ENCODE measurements at regions of chr10 and their contacts with region 1.

Region 1: DNA sequence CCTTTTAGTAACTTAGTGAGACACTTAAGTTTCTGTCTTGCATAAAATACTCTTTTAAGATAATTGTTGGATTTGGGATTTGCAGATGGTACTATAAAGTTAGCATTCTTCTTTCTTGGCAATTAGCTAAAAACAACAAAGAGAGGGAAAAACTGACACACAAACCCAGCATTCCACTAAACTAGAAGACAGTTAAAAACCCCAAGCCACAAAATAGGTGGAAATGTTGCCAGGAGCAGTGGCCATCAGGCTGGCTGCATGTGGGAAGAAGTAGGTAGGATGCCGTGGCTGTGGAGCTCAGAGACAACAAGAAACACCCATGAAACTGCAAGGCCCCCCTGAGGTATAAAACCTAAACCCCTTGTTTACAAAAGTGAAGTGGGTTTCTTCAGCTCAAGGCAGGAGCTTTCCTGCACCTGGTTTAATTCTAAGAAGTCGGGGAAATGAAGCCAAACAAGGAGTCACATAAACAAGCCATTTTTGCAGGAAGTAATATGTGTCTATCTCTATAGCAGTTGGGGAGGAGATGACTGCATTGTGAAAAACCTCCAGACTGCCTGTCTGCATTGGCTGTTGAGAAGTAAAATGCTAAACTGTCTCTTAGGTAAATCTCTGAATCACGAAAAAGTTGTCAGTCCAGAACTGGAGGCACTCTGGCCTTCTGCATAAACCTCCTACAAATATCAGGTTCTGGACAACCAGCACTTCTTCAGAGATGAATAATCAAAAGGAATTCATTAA is 9.5 kb downstream of the RAB18 start:
- DNase-seq: peak in 2 of 9 donors; percentile 10 to 18
- ATAC-seq: no peak
- H3K4me3 ChIP-seq: no peak overlapping the region
- H3K4me3 Mint-ChIP-seq: peak overlapping the region; percentile 11 to 87 (median 50)
- H3K27ac ChIP-seq: peak overlapping the region; percentile 17
- H3K27ac Mint-ChIP-seq: peak overlapping the region; percentile 32 to 93 (median 83)
- H3K4me1 ChIP-seq: peaks cover 0 to 15% of the 10 kb centered on the region in 2 donors
- H3K4me1 Mint-ChIP-seq: peaks cover 49 to 95% (median 88%) of the 10 kb centered on the region in 7 donors
- H3K27me3 ChIP-seq: no peaks in the 10 kb centered on the region
- H3K27me3 Mint-ChIP-seq: no peaks in the 10 kb centered on the region

Region 2: DNA sequence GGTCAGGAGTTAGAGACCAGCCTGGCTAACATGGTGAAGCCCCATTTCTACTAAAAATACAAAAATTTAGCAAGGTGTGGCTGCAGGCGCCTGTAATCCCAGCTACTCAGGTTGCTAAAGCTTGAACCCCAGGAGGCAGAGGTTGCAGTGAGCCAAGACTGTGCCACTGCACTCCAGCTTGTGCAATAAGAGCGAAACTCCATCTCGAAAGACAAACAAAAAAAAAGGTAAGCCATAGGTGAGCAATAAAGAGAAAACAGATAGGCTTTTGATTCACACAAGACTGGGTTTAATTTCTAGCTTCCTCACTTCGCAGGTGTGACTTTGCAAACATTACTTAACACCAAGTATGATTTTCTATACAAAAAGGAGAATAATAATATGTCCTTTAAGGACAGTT is 200.8 kb before region 1 on chr10:
- CTCF ChIA-PET with region 1: no interaction called
- POLR2A ChIA-PET with region 1: no interaction called
- intact Hi-C with region 1: no loop called
- DNase-seq: no peak
- ATAC-seq: no peak
- H3K4me3 ChIP-seq: no peak overlapping the region
- H3K4me3 Mint-ChIP-seq: no peak overlapping the region
- H3K27ac ChIP-seq: no peak overlapping the region
- H3K27ac Mint-ChIP-seq: no peak overlapping the region
- H3K4me1 ChIP-seq: no peaks in the 10 kb centered on the region
- H3K4me1 Mint-ChIP-seq: peaks cover 0 to 3% (median 0%) of the 10 kb centered on the region in 7 donors
- H3K27me3 ChIP-seq: no peaks in the 10 kb centered on the region
- H3K27me3 Mint-ChIP-seq: peaks cover 1 to 12% (median 7%) of the 10 kb centered on the region in 5 donors

Region 3: DNA sequence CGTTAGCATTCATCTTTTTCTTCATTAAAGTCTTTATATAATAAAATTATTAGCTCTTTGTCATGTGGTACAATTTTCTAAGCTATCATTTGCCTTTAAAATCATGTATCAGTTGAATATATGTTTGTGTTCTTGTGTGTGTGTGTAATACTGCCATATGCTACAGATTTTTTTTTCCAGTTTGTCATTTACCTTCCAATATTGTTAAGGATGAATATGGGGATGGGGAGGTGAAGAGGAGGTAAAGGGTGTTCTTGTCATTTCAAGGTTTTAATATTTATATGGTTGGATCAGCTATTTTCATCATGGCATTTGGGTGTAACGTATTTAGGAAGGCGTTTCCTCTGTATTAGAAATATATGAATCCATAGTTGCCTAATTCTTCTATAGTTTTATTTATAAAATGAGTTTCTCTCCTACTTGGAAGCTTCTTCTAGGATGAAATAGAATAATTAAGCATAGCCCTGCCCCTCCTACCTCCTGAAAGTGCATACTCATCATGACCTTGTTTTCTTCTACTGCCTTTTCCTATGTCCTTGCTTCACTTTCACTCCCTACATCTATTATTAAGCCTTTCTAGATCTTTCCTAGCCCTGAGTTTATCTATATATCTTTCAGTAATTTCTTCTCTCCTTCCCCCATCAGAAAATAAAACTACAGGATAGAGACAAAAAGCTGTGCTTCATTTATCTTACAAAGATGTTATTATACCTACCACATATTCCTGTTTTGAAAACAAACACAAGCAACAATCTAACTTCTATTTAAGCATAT is 15.6 kb after region 1 on chr10:
- CTCF ChIA-PET with region 1: interaction called, 5 read pairs
- POLR2A ChIA-PET with region 1: no interaction called
- intact Hi-C with region 1: loop called in 1 of 2 experiments (anchors 2 kb)
- DNase-seq: no peak
- ATAC-seq: no peak
- H3K4me3 ChIP-seq: no peak overlapping the region
- H3K4me3 Mint-ChIP-seq: peak overlapping the region in 1 of 10 donors; percentile 10
- H3K27ac ChIP-seq: no peak overlapping the region
- H3K27ac Mint-ChIP-seq: peak overlapping the region in 3 of 9 donors; percentile 26 to 55 (median 27)
- H3K4me1 ChIP-seq: peaks cover 0 to 14% of the 10 kb centered on the region in 2 donors
- H3K4me1 Mint-ChIP-seq: peaks cover 39 to 73% (median 67%) of the 10 kb centered on the region in 7 donors
- H3K27me3 ChIP-seq: no peaks in the 10 kb centered on the region
- H3K27me3 Mint-ChIP-seq: no peaks in the 10 kb centered on the region

Measured in naive thymus-derived CD4-positive, alpha-beta T cell (primary cell).